Psoas muscle (tissue), 8 donors: ENCODE measurements at regions of chr7 and their contacts with region 1.

Region 1: DNA sequence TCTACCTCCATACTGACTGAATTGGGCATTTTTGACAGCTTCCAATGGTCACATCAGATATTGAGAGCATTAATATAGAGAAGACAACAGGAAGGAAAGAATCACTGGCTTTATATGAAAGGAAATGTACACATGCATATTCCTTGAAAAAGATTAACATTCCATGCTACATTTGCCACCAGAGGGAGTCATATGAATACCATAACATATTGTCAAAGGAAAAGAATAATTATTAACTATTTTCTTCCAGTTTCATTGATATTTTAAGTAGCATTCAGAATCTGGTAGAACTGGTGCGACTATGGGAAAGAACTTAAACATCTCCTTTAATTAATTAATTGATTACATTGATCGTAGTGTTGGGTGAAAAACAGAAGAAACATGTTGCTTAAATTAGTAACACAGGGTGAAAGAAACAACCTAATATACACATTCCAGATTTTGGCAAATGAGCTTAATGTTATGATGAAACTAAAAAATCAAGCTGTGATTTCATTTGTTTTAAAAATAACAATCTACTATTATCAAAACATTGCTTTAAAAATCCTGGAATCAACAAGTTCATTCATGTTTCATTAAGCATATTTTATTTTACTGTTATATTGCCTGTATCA is 71.5 kb downstream of the GPR85 start:
- DNase-seq: no peak
- ATAC-seq: no peak
- H3K4me3 ChIP-seq: no peak overlapping the region
- H3K27ac ChIP-seq: no peak overlapping the region
- H3K4me1 ChIP-seq: no peaks in the 10 kb centered on the region
- H3K27me3 ChIP-seq: no peaks in the 10 kb centered on the region
- CTCF ChIP-seq: peak; percentile 47

Region 2: GRCh38 chr7:112566442-112567324 is 448.5 kb before region 1 on chr7:
- intact Hi-C with region 1: no loop called
- DNase-seq: no peak
- ATAC-seq: peak; percentile 48 to 89 (median 67)
- H3K4me3 ChIP-seq: peak overlapping the region; percentile 50
- H3K27ac ChIP-seq: peak overlapping the region; percentile 65
- H3K4me1 ChIP-seq: peaks cover 11% of the 10 kb centered on the region
- H3K27me3 ChIP-seq: no peaks in the 10 kb centered on the region
- CTCF ChIP-seq: no peak

Region 3: GRCh38 chr7:113421696-113422330 is 406.7 kb after region 1 on chr7:
- intact Hi-C with region 1: loop called in 1 of 2 experiments (anchors 2 kb)
- DNase-seq: peak; percentile 51 to 63
- ATAC-seq: peak; percentile 75 to 91 (median 86)
- H3K4me3 ChIP-seq: no peak overlapping the region
- H3K27ac ChIP-seq: no peak overlapping the region
- H3K4me1 ChIP-seq: no peaks in the 10 kb centered on the region
- H3K27me3 ChIP-seq: no peaks in the 10 kb centered on the region
- CTCF ChIP-seq: peak; percentile 75